CD4-positive, alpha-beta memory T cell (primary cell): ENCODE measurements at regions of chr22 and their contacts with region 1.

Region 1: GRCh38 chr22:32103658-32104315 is 55.3 kb downstream of the C22orf42 start:
- DNase-seq: peak in 4 of 5 donors; percentile 32 to 38 (median 36)
- H3K4me3 ChIP-seq: no peak overlapping the region
- H3K4me3 Mint-ChIP-seq: no peak overlapping the region
- H3K27ac ChIP-seq: no peak overlapping the region
- H3K27ac Mint-ChIP-seq: no peak overlapping the region
- H3K4me1 ChIP-seq: no peaks in the 10 kb centered on the region
- H3K4me1 Mint-ChIP-seq: no peaks in the 10 kb centered on the region
- H3K27me3 ChIP-seq: no peaks in the 10 kb centered on the region
- H3K27me3 Mint-ChIP-seq: peaks cover 13 to 14% of the 10 kb centered on the region in 2 donors

Region 2: GRCh38 chr22:32144496-32145274 is 40.9 kb after region 1 on chr22:
- CTCF ChIA-PET with region 1: no interaction called
- POLR2A ChIA-PET with region 1: no interaction called
- intact Hi-C with region 1: no loop called
- DNase-seq: peak in 1 of 5 donors; percentile 12
- H3K4me3 ChIP-seq: no peak overlapping the region
- H3K4me3 Mint-ChIP-seq: peak overlapping the region in 5 of 8 donors; percentile 10 to 60 (median 29)
- H3K27ac ChIP-seq: no peak overlapping the region
- H3K27ac Mint-ChIP-seq: peak overlapping the region; percentile 7 to 88 (median 60)
- H3K4me1 ChIP-seq: peaks cover 40% of the 10 kb centered on the region
- H3K4me1 Mint-ChIP-seq: peaks cover 31 to 47% (median 39%) of the 10 kb centered on the region in 4 donors
- H3K27me3 ChIP-seq: no peaks in the 10 kb centered on the region
- H3K27me3 Mint-ChIP-seq: no peaks in the 10 kb centered on the region

Region 3: DNA sequence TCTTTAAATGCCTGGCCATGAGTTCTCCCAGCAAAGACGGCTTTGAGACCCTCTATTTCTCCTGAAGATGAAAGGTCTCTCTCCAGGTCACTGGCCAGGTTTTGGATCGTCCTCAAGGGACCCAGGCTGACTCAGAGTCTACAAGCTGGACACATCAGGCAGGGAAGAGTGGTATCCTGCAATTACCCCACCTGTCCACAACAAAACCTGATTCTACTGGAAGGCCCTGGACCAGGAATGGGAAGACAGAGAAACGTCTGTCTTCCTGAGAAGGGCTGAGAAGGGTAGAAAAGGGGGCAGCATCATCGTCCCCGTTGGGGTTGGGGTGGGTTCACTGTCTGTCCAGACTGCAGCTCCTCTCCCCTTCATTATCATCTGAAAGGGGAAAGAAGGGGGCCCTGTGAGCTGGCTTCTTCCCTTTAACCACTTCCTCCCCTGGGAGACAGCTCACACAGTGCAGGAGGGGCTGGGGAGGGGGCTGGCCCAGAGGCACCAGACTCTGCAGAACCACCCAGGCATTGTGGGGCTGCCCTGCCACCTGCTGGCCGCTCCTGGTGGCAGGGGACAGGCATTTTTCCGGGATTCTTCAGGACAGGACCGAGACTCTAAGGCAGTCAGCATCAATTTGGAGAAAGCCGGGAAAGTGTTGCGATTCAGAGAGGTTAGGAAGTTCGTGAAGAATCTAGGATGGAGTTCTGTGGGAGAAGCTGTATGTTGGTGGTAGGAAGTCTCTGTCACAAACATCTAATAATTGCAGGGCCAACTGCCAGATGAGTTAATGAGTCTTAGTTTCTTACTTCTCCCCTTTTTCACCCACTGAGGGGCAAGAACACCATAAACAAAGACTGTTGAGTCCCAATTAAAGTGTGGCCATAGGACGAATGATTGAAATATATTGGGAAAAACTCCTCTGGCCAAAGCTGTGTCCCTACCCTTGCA is 896.8 kb after region 1 on chr22:
- CTCF ChIA-PET with region 1: no interaction called
- POLR2A ChIA-PET with region 1: no interaction called
- intact Hi-C with region 1: loop called (anchors 10 kb)
- DNase-seq: peak in 4 of 5 donors; percentile 4 to 12 (median 9)
- H3K4me3 ChIP-seq: no peak overlapping the region
- H3K4me3 Mint-ChIP-seq: no peak overlapping the region
- H3K27ac ChIP-seq: no peak overlapping the region
- H3K27ac Mint-ChIP-seq: no peak overlapping the region
- H3K4me1 ChIP-seq: no peaks in the 10 kb centered on the region
- H3K4me1 Mint-ChIP-seq: peaks cover 0 to 2% (median 0%) of the 10 kb centered on the region in 4 donors
- H3K27me3 ChIP-seq: no peaks in the 10 kb centered on the region
- H3K27me3 Mint-ChIP-seq: peaks cover 2% of the 10 kb centered on the region in 2 donors